ENCODE measurements at regions of chr11 and their contacts with region 1.

Region 1: DNA sequence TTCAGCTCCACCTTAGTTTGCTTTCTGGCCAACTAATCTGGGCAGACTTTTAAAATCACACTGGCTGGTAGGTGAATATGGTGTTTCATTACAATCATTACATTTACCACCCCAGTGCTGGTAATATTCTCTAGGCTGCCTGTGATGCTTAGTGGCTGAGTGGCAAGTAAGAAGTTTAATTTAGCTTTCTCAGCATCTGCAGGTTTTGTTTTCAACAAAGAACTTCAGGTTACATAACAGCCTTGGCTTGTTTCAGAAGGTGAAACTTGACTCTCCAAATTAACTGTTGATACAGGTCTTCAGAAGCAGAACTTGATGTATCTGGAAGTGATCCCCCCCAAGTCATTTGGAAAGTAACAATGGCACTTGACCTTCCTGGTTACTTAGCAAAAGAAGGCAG is 423.3 kb upstream of the CCDC90B start:
- DNase-seq: no peak
- H3K4me3 ChIP-seq: no peak overlapping the region
- H3K27ac ChIP-seq: no peak overlapping the region
- H3K4me1 ChIP-seq: no peaks in the 10 kb centered on the region
- H3K27me3 ChIP-seq: no peaks in the 10 kb centered on the region
- CTCF ChIP-seq: no peak
- EP300 ChIP-seq: no peak
- POLR2A ChIP-seq: no peak

Region 2: GRCh38 chr11:82610671-82611070 is 1098.8 kb before region 1 on chr11:
- intact Hi-C with region 1: no loop called
- DNase-seq: no peak
- H3K4me3 ChIP-seq: no peak overlapping the region
- H3K27ac ChIP-seq: no peak overlapping the region
- H3K4me1 ChIP-seq: no peaks in the 10 kb centered on the region
- H3K27me3 ChIP-seq: no peaks in the 10 kb centered on the region
- CTCF ChIP-seq: no peak
- EP300 ChIP-seq: no peak
- POLR2A ChIP-seq: no peak

Region 3: DNA sequence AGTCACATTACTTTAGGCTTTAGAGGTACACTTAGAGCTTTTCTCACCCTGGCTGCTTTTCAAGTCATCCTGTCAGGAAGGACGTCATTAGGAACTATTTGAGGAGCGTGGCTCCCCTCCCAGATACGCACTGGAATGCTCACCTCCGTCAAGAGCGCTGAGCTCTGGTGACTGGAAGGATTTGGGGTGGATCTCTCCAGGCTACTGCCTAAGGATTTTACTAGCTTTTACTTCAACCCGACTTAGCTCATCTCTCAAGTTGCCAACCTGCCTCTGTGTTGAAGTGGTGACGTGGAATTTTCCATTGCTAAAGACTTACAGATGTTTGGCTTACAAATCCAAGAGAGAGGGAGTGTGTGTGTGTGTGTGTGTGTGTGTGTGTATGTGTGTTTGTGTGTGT is 67.9 kb before region 1 on chr11:
- intact Hi-C with region 1: no loop called
- DNase-seq: peak in 1 of 5 donors; percentile 20
- H3K4me3 ChIP-seq: no peak overlapping the region
- H3K27ac ChIP-seq: no peak overlapping the region
- H3K4me1 ChIP-seq: no peaks in the 10 kb centered on the region
- H3K27me3 ChIP-seq: no peaks in the 10 kb centered on the region
- CTCF ChIP-seq: no peak
- EP300 ChIP-seq: no peak
- POLR2A ChIP-seq: no peak

Region 4: DNA sequence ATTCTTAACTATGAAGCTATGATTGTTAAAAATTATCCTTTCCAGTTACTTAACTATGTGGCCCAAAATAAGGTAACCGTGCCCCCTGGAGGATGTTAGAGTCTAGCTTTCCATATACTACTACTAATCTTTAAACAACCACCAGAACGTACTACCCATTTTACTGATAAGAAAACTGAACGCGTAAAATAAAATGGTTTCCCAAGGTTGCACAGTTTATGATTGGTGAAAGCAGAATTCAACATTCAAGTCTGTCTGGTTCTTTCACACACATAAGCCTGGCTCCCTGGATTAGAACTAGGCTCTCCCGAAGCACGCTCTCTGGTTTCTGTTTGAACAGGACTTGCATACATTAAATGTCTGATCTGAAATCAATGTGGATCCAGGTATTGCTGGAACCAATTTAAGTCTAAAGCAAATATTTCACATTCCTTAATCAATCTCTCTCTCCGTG is 14.6 kb after region 1 on chr11:
- intact Hi-C with region 1: loop called in 1 of 4 experiments (anchors 2 kb)
- DNase-seq: peak in 1 of 5 donors; percentile 53
- H3K4me3 ChIP-seq: peak overlapping the region; percentile 36
- H3K27ac ChIP-seq: no peak overlapping the region
- H3K4me1 ChIP-seq: no peaks in the 10 kb centered on the region
- H3K27me3 ChIP-seq: no peaks in the 10 kb centered on the region
- CTCF ChIP-seq: peak in 1 of 3 donors; percentile 18
- EP300 ChIP-seq: no peak
- POLR2A ChIP-seq: no peak

Region 5: DNA sequence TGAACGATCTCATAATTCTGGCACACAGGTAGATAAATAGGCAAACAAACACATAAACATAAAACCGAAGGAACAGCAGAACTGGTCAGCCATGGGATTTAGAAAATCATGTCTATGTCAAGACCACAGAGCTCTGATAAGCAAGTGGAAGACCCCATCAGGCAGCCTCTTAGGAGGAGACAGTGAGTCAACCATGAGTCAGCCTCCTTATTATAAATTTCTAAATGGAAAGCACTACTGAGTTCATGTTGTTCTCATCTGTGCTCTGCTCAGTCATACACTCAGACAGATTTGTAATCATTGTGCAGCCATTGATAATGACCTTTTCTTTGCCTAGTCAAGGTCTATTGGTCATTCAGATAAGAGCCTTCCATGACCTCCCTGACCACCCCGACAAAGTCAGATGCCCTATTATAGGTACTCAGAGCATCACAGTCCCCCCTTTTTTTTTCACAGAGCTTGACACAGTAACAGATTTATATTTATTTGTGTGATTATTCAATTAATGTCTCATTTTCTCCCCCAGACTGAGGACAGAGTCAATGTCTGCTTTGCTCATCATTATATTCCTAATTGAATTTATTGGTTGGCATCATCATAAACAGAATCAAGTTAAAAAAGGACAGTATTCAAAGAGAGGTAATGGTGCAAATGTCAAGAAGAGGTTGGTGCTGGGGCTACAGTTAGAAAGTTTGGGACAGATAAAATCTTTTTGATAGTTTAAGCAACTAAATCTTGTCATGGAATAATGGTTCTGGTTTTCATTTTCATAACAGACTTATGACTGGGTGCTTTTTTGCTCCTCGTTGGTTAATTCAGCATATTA is 156.4 kb after region 1 on chr11:
- intact Hi-C with region 1: no loop called
- DNase-seq: no peak
- H3K4me3 ChIP-seq: no peak overlapping the region
- H3K27ac ChIP-seq: no peak overlapping the region
- H3K4me1 ChIP-seq: no peaks in the 10 kb centered on the region
- H3K27me3 ChIP-seq: no peaks in the 10 kb centered on the region
- CTCF ChIP-seq: no peak
- EP300 ChIP-seq: no peak
- POLR2A ChIP-seq: no peak

Region 6: GRCh38 chr11:84136926-84137325 is 427.5 kb after region 1 on chr11:
- intact Hi-C with region 1: no loop called
- DNase-seq: no peak
- H3K4me3 ChIP-seq: no peak overlapping the region
- H3K27ac ChIP-seq: no peak overlapping the region
- H3K4me1 ChIP-seq: peaks cover 1% of the 10 kb centered on the region
- H3K27me3 ChIP-seq: no peaks in the 10 kb centered on the region
- CTCF ChIP-seq: no peak
- EP300 ChIP-seq: no peak
- POLR2A ChIP-seq: no peak